Naive thymus-derived CD8-positive, alpha-beta T cell (primary cell): ENCODE measurements at regions of chr2 and their contacts with region 1.

Region 1: DNA sequence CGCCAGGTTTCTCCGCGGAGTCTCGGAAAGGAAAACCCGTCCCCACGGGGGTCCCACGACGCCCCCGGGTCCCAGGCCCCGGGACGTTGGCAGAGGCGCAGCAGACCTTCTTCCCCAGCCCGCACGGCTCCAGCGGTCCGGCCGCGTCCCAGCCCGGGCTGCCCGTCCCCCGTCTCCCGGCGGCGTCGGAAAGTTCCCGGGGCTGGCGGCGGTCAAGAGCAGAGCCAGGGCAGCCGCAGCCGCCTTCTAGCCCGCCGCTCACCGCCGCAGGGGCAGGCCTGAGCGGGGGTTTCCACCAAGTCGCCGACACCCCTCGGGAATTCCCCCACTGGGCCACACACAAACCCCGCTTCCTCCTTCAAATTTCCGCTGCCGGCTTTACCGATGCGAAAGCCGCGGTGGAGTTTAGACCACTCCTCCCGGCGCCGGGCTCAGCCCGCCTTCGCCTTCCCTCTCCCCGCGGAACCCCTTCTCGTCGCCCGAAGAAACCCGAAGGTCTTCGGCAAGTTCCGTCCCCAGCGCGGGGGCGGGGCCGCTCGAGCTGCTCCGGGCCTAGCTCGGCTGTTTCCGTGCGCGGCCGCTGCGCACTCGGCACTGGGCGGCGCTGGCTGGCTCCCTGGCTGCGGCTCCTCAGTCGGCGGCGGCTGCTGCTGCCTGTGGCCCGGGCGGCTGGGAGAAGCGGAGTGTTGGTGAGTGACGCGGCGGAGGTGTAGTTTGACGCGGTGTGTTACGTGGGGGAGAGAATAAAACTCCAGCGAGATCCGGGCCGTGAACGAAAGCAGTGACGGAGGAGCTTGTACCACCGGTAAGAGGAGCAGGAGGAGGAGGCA is at the start of gene CREB1:
- DNase-seq: peak; percentile 99 to 100 (median 100)
- ATAC-seq: peak; percentile 82 to 84
- H3K4me3 Mint-ChIP-seq: peak within 1 kb of the TSS; percentile 85 to 100 (median 96)
- H3K27ac Mint-ChIP-seq: peak within 1 kb of the TSS; percentile 98 to 100 (median 99)
- H3K4me1 Mint-ChIP-seq: peaks cover 31 to 74% (median 60%) of the 10 kb centered on the region in 4 donors
- H3K27me3 Mint-ChIP-seq: peaks cover 0 to 4% (median 0%) of the 10 kb centered on the region in 5 donors
- polyA plus RNA-seq, gene CREB1: 58.5 to 71.4 (median 63.3) TPM

Region 2: GRCh38 chr2:207352978-207353671 is 176.4 kb before region 1 on chr2:
- POLR2A ChIA-PET with region 1: no interaction called
- DNase-seq: peak in 7 of 10 donors; percentile 2 to 40 (median 8)
- ATAC-seq: peak; percentile 70 to 71
- H3K4me3 Mint-ChIP-seq: peak overlapping the region in 1 of 10 donors; percentile 37
- H3K27ac Mint-ChIP-seq: peak overlapping the region in 2 of 10 donors; percentile 10 to 28
- H3K4me1 Mint-ChIP-seq: peaks cover 3 to 10% (median 9%) of the 10 kb centered on the region in 4 donors
- H3K27me3 Mint-ChIP-seq: no peaks in the 10 kb centered on the region

Region 3: GRCh38 chr2:207375192-207375861 is 154.2 kb before region 1 on chr2:
- POLR2A ChIA-PET with region 1: no interaction called
- DNase-seq: no peak
- ATAC-seq: no peak
- H3K4me3 Mint-ChIP-seq: no peak overlapping the region
- H3K27ac Mint-ChIP-seq: no peak overlapping the region
- H3K4me1 Mint-ChIP-seq: no peaks in the 10 kb centered on the region
- H3K27me3 Mint-ChIP-seq: peaks cover 0 to 3% (median 0%) of the 10 kb centered on the region in 5 donors

Region 4: DNA sequence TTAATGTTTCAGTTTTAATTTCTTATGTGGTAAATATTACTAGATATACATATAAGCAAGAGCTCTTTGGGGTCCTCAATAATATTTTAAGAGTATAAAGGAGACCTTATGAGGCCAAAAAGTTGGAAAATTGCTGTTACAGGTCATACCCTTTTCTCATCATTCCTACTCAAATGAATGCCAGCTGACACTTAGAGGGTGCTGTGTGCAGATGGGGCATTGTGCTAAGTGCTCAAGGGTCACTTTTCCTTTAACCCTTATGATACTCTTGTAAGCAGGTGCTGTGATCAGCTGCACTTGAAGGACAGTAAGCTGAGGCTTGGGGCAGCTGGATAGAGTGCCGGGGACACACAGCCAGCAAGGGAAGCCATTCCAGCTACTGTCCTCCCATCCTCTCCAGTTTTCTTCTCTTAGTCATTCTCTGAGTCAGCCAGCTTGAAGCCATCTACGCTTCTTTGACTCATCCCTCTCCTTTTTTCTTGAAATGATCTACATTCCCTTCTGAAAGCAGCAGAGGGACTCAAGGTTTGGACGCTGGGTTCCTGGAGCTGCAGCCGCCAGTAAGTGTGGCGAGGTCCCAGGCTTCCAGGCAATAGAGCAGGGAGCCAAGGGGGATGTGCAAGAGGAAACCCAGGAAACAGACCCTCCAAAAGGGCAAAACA is 41.8 kb before region 1 on chr2:
- POLR2A ChIA-PET with region 1: no interaction called
- DNase-seq: no peak
- ATAC-seq: no peak
- H3K4me3 Mint-ChIP-seq: no peak overlapping the region
- H3K27ac Mint-ChIP-seq: no peak overlapping the region
- H3K4me1 Mint-ChIP-seq: peaks cover 0 to 11% (median 2%) of the 10 kb centered on the region in 4 donors
- H3K27me3 Mint-ChIP-seq: no peaks in the 10 kb centered on the region

Region 5: DNA sequence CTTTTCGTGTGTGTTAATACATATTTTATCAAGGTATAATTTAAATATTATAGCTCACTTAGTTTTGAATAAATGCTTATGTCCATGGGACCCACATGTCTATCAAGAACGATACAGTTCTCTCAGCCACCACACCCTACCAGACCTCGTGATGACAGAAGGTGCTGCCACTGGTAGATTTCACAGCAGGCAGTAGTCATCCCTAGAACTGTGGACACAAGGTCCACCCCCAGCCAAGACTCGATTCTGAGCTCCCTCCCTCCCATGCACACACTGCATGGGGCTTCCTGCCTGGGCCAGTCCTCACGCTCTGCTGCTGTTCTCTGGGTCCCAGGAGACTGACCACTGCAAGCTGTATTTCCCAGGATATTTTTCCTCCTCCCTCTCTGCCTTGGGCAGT is 26.3 kb before region 1 on chr2:
- POLR2A ChIA-PET with region 1: interaction called, 23 read pairs
- DNase-seq: no peak
- ATAC-seq: no peak
- H3K4me3 Mint-ChIP-seq: no peak overlapping the region
- H3K27ac Mint-ChIP-seq: peak overlapping the region in 1 of 10 donors; percentile 67
- H3K4me1 Mint-ChIP-seq: peaks cover 21 to 85% (median 46%) of the 10 kb centered on the region in 4 donors
- H3K27me3 Mint-ChIP-seq: peaks cover 0 to 2% (median 0%) of the 10 kb centered on the region in 5 donors

Region 6: DNA sequence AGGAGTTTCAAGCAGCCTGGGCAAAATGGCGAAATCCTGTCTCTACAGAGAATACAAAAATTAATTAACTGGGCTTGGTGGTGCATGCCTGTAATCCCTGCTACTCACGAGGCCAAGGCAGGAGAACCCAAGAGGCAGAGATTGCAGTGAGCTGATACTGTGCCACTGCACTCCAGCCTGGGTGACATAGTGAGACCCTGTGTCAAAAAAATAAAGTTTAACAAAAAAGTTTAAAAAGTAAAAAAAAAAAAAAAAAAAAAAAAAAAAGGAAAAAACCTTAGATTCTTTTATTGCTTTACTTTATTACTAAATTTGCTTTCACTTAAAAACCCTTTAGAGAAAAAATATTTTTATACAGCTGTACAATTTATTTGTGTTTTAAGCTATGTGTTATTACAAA is 10.9 kb after region 1 on chr2:
- POLR2A ChIA-PET with region 1: interaction called, 34 read pairs
- DNase-seq: no peak
- ATAC-seq: no peak
- H3K4me3 Mint-ChIP-seq: peak overlapping the region in 2 of 10 donors; percentile 0 to 39
- H3K27ac Mint-ChIP-seq: peak overlapping the region in 3 of 10 donors; percentile 14 to 70 (median 31)
- H3K4me1 Mint-ChIP-seq: peaks cover 20 to 90% (median 72%) of the 10 kb centered on the region in 4 donors
- H3K27me3 Mint-ChIP-seq: no peaks in the 10 kb centered on the region

Region 7: GRCh38 chr2:207619764-207620203 is 90.2 kb after region 1 on chr2:
- POLR2A ChIA-PET with region 1: interaction called, 115 read pairs
- DNase-seq: peak in 3 of 10 donors; percentile 13 to 24 (median 19)
- ATAC-seq: peak; percentile 31 to 37
- H3K4me3 Mint-ChIP-seq: peak overlapping the region in 9 of 10 donors; percentile 15 to 64 (median 47)
- H3K27ac Mint-ChIP-seq: peak overlapping the region; percentile 11 to 85 (median 66)
- H3K4me1 Mint-ChIP-seq: peaks cover 22 to 59% (median 58%) of the 10 kb centered on the region in 4 donors
- H3K27me3 Mint-ChIP-seq: no peaks in the 10 kb centered on the region

Region 8: DNA sequence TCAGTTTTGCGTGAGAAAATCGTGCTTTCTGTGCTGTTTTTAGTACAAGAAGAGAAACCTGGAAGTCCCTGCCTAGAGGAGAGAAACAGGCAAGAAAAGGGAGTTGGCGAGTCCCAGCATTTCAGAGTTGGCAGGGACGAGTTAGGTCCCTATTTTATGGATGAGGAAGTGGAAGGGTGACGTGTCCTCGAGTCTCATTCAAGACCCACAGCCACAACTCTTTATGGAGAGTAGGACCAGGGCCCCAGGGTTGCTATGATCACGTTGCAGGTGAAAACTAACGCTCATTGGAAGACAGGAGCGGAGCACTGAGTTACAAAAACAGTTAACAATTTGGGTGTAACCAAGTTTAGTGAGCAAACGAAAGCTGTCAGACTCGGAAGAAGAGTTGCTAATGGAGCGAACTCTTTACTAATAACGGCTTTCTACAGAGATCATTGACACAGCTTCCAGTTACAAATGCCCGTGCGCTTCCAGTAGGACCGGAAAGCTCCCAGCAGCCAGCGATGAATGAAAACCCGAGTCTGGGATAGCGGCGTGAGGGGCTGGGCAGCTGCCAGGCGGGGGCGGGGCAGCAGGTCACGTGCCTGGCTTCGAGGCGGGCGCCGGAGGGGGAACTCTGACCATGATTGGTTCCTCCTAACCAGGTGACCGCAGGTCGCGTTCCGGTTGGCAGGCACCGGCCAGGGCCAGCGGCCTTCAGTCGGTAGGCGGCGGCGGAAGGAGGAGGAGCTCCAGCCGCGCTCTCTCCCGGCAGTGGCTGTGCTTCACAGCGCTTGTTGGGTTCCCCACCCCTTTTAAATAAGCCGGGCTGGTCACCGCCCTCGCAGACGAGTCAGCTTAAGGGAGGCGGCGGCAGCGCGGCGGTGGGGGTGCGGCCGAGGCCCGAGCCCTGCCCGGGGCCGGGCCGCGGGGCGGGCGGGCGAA is 181.5 kb after region 1 on chr2 and contains the start of gene CCNYL1:
- POLR2A ChIA-PET with region 1: interaction called, 24 read pairs
- DNase-seq: peak; percentile 94 to 99 (median 98)
- ATAC-seq: peak; percentile 95 to 97
- H3K4me3 Mint-ChIP-seq: peak within 1 kb of the TSS; percentile 93 to 99 (median 96)
- H3K27ac Mint-ChIP-seq: peak within 1 kb of the TSS; percentile 81 to 97 (median 92)
- H3K4me1 Mint-ChIP-seq: peaks cover 18 to 28% (median 26%) of the 10 kb centered on the region in 4 donors
- H3K27me3 Mint-ChIP-seq: no peaks in the 10 kb centered on the region
- polyA plus RNA-seq, gene CCNYL1: 1.2 to 2.1 (median 1.3) TPM